Endothelial cell of umbilical vein (primary cell): ENCODE measurements at regions of chr12 and their contacts with region 1.

Region 1: DNA sequence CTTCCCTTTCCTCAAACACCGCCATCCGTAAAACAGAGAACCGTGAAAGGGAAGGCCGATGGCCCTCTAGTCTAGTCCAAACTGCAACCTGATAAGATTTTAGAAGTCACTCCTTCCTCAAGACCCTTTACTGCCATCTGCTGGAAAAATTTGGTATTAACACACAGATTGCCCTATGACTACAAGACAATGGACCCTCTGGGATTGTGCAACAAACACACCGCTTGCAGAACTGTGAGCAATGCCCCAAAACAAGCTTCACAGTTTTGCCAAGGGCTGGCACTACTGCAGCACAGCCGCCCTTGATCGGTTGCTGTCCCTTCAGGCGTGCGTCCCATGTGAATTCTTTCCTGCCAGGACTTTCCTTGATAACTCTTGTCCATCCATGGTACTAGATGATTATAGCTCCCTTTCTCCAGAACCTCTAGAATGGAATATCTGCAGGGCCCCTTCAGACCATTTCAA is 23.1 kb downstream of the LLPH start:
- DNase-seq: peak; percentile 89
- H3K4me3 ChIP-seq: no peak overlapping the region
- H3K27ac ChIP-seq: no peak overlapping the region
- H3K4me1 ChIP-seq: peaks cover 2% of the 10 kb centered on the region
- H3K27me3 ChIP-seq: peaks cover 9 to 17% of the 10 kb centered on the region in 2 experiments
- CTCF ChIP-seq: peak; percentile 56 to 70
- POLR2A ChIP-seq: no peak

Region 2: DNA sequence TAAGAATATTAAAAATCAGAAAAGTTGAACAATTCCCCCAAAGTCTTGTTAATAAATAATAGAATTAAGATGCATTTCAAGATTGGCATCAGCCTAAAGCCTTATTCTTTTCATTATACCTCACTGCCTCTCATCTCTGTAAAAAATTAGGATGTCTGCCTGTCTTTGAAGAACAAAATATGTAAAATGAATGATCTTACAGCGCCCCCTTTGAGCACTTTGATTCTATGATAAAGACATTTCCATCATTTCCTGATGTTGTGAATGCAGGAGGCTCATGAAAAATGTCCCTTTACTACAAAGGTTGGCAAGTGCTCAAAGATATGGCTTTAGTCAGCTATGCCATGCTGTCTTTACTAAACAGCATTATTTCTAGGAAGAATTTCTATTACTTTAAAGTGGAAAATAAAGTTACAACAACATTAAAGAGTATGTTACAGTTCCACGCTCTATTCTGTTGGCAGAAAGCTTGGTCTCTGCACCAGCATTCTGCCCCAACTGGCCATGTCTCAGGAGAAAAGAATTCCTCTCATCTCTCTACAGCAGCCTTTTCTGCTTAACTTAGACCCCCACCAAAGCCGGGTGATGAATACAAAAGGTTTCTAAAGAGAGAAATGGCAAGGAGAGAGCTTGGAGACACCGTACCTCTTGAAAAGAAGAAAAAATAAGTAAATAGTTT is 72.1 kb before region 1 on chr12:
- CTCF ChIA-PET with region 1: interaction called, 9 read pairs
- POLR2A ChIA-PET with region 1: no interaction called
- dilution Hi-C with region 1: no loop called
- intact Hi-C with region 1: loop called (anchors 5 kb)
- DNase-seq: peak; percentile 71
- H3K4me3 ChIP-seq: no peak overlapping the region
- H3K27ac ChIP-seq: no peak overlapping the region
- H3K4me1 ChIP-seq: peaks cover 10% of the 10 kb centered on the region
- H3K27me3 ChIP-seq: peaks cover 1 to 3% of the 10 kb centered on the region in 2 experiments
- CTCF ChIP-seq: peak; percentile 26 to 35
- POLR2A ChIP-seq: no peak

Region 3: DNA sequence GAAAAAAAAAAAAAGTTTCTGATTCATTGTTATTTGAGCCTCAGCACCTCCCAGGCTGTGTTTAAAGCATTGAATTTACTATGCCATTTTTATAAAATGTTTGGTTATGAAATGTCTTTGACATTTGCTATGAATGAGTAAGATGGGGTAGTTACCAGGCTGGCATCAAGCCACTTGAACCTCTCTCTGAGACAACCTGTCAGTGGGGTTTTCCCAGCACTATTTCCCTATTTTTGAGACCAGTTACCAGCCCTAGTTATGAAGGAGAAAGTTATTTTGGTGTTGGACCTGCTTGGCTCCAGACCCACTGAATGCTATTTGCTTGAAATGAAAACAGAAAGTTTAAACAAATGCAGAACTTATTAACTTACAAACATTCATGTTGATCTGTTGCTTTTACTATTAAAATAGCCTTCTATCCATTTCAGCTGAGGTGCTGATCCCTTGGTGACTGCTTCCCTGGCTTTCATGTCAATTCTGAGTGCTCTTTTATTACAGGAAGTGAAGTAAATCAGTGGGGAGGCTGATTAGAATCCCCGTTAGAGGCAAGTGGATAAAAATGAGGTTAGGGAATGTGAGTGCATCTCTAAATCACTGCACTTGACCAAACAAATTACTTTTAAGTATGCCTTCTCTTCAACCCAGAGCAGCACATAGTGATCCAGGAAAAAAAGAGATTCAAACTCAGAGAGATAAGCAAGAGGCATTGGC is 14.8 kb before region 1 on chr12:
- CTCF ChIA-PET with region 1: interaction called, 5 read pairs
- POLR2A ChIA-PET with region 1: no interaction called
- dilution Hi-C with region 1: no loop called
- intact Hi-C with region 1: loop called (anchors 2 kb)
- DNase-seq: peak; percentile 24
- H3K4me3 ChIP-seq: no peak overlapping the region
- H3K27ac ChIP-seq: no peak overlapping the region
- H3K4me1 ChIP-seq: peaks cover 6% of the 10 kb centered on the region
- H3K27me3 ChIP-seq: no peaks in the 10 kb centered on the region
- CTCF ChIP-seq: no peak
- POLR2A ChIP-seq: no peak